GM18951 (cell line): ENCODE measurements at regions of chr1 and their contacts with region 1.

Region 1: DNA sequence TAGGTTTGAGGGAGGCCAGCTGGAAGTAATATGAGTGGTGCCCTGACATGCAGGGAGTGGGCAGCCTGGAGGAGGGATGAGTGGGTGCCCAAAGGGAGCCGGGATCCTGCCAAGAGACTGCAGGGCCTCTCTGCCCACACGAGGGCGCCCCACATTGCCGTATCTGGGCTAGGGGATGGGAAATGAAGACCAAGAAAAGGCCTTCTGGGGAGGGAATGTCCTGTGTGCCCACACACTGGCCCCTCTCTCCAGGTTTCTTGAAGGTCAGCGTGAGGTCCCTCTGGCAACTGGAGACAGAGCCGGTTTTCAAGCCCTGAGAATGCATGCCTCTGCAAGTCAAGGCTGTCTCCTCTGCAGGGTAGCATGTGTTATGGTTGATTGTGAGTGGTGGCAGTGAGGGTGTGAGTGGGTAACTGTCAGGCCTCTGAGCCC is 94.1 kb upstream of the PPM1J start:
- POLR2A ChIP-seq: no peak

Region 2: GRCh38 chr1:112263453-112263852 is 545.8 kb before region 1 on chr1:
- in situ Hi-C with region 1: no loop called
- POLR2A ChIP-seq: no peak

Region 3: GRCh38 chr1:112715264-112716053 is 93.8 kb before region 1 on chr1 and contains the start of gene PPM1J:
- in situ Hi-C with region 1: loop called (anchors 5 kb)
- POLR2A ChIP-seq: no peak